ENCODE measurements at regions of chr19 and their contacts with region 1.

Region 1: GRCh38 chr19:43595999-43596841 is at the starts of genes IRGQ and ZNF576:
- DNase-seq: peak; percentile 98 to 100 (median 99)
- ATAC-seq: peak; percentile 89
- H3K4me3 ChIP-seq: peak within 1 kb of the TSS; percentile 76
- H3K27ac ChIP-seq: peak within 1 kb of the TSS; percentile 99
- H3K4me1 ChIP-seq: peaks cover 15 to 47% of the 10 kb centered on the region in 2 experiments; a peak in 4 of 5 replicates
- H3K27me3 ChIP-seq: no peaks in the 10 kb centered on the region
- CTCF ChIP-seq: peak in 2 of 3 experiments; percentile 12 to 30; a peak in 3 of 6 replicates
- EP300 ChIP-seq: no peak; the same call in 1 of the 2 replicates
- POLR2A ChIP-seq: peak; percentile 63
- RAD21 ChIP-seq: peak in 1 of 2 experiments; percentile 28; a peak in 3 of 4 replicates
- polyA plus RNA-seq, gene IRGQ: 3.5 to 11.2 TPM
- polyA plus RNA-seq, gene ZNF576: 12.2 to 18.2 TPM

Region 2: DNA sequence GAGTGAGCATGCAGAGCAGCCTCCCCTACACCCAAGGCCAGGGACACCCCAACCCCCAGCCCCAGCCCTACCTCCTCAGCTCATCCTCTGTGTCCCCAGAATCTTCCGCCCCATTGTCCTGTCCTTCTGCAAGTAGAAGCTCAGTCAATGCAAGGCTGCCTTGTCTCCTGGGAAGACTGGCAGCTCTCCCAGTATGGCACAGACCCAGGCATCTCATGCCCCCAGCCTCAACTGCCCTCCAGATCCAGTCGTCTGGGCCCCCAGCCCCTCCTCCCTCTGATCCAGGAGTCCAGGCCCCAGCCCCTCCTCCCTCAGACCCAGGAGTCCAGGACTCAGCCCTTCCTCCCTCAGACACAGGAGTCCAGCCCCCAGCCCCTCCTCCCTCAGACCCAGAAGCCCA is 50.2 kb before region 1 on chr19:
- CTCF ChIA-PET with region 1: no interaction called
- POLR2A ChIA-PET with region 1: no interaction called
- in situ Hi-C with region 1: no loop called
- intact Hi-C with region 1: no loop called
- DNase-seq: no peak
- ATAC-seq: no peak
- H3K4me3 ChIP-seq: no peak overlapping the region
- H3K27ac ChIP-seq: no peak overlapping the region
- H3K4me1 ChIP-seq: no peaks in the 10 kb centered on the region; a peak in 1 of 5 replicates
- H3K27me3 ChIP-seq: no peaks in the 10 kb centered on the region
- CTCF ChIP-seq: no peak
- EP300 ChIP-seq: no peak
- POLR2A ChIP-seq: no peak
- RAD21 ChIP-seq: no peak

Region 3: DNA sequence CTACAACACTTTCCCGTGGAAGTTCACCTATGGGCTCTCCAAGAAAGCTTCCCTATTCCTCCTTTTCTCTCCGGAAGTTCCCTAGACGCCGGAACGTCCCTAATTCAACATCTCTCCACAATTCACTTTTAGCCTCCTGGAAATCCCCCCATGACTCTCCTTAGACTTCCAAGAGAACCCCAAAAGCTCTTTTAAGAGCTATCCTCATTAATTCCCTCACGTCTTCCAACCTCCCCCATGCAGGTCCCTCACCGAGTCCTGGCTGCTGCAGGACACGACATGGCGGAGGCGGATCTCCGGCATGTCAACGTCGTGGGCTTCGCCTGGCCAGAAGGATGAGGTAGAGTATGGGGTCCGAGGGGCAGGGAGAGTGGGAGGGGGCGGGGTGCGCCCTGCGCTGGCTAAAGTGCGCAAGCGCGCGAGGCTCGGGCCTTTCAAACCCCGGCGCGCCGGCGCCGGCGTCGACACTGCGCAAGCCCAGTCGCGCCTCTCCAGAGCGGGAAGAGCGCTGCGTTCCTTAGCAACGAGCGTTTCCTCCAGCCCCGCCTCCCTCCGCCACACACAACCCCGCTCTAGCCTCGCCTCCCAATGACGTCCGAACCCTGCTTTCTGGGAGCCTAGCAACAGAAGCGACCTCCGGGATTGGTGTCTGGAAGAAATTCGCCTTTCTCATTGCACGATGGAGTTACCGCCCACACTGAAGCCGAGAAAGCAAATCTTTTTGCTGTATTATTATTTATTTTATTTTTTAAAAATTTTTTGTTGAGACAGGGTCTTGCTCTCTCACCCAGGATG is 20.9 kb before region 1 on chr19 and contains the starts of genes PINLYP and XRCC1:
- CTCF ChIA-PET with region 1: no interaction called
- POLR2A ChIA-PET with region 1: interaction called, 5 read pairs
- in situ Hi-C with region 1: no loop called
- intact Hi-C with region 1: loop called (anchors 1 kb)
- DNase-seq: peak; percentile 96 to 99 (median 96)
- ATAC-seq: peak; percentile 99
- H3K4me3 ChIP-seq: peak within 1 kb of the TSS; percentile 91
- H3K27ac ChIP-seq: peak within 1 kb of the TSS; percentile 83
- H3K4me1 ChIP-seq: peaks cover 5 to 16% of the 10 kb centered on the region in 2 experiments; a peak in 3 of 5 replicates
- H3K27me3 ChIP-seq: no peaks in the 10 kb centered on the region; a peak in 1 of 5 replicates
- CTCF ChIP-seq: no peak
- EP300 ChIP-seq: no peak
- POLR2A ChIP-seq: peak; percentile 74
- RAD21 ChIP-seq: no peak
- polyA plus RNA-seq, gene PINLYP: 4.6 to 6.0 TPM
- polyA plus RNA-seq, gene XRCC1: 1.5 to 5.2 TPM

Region 4: GRCh38 chr19:43606569-43607229 is 10.5 kb after region 1 on chr19:
- CTCF ChIA-PET with region 1: no interaction called
- POLR2A ChIA-PET with region 1: interaction called, 60 read pairs
- in situ Hi-C with region 1: no loop called
- intact Hi-C with region 1: no loop called
- DNase-seq: no peak
- ATAC-seq: no peak
- H3K4me3 ChIP-seq: no peak overlapping the region
- H3K27ac ChIP-seq: peak overlapping the region; percentile 19; the same call in 1 of the 3 replicates
- H3K4me1 ChIP-seq: peaks cover 20 to 22% of the 10 kb centered on the region in 2 experiments
- H3K27me3 ChIP-seq: no peaks in the 10 kb centered on the region
- CTCF ChIP-seq: no peak
- EP300 ChIP-seq: no peak
- POLR2A ChIP-seq: no peak
- RAD21 ChIP-seq: no peak

Region 5: GRCh38 chr19:43651758-43652545 is 55.7 kb after region 1 on chr19:
- CTCF ChIA-PET with region 1: interaction called, 6 read pairs
- POLR2A ChIA-PET with region 1: no interaction called
- in situ Hi-C with region 1: no loop called
- intact Hi-C with region 1: loop called (anchors 2 kb)
- DNase-seq: peak; percentile 66 to 89 (median 76)
- ATAC-seq: peak; percentile 98
- H3K4me3 ChIP-seq: peak overlapping the region; percentile 34
- H3K27ac ChIP-seq: peak overlapping the region; percentile 56
- H3K4me1 ChIP-seq: peaks cover 0 to 3% of the 10 kb centered on the region in 2 experiments; a peak in 1 of 5 replicates
- H3K27me3 ChIP-seq: no peaks in the 10 kb centered on the region
- CTCF ChIP-seq: peak; percentile 89 to 95 (median 91)
- EP300 ChIP-seq: no peak
- POLR2A ChIP-seq: no peak
- RAD21 ChIP-seq: peak; percentile 67 to 87